ENCODE measurements at regions of chr20 and their contacts with region 1.

Region 1: GRCh38 chr20:1466211-1467081 is at the start of gene NSFL1C:
- DNase-seq: peak; percentile 96
- H3K4me3 Mint-ChIP-seq: peak within 1 kb of the TSS; percentile 81
- H3K27ac Mint-ChIP-seq: peak within 1 kb of the TSS; percentile 80
- H3K4me1 Mint-ChIP-seq: peaks cover 48% of the 10 kb centered on the region
- H3K27me3 Mint-ChIP-seq: peaks cover 16% of the 10 kb centered on the region
- total RNA-seq, gene NSFL1C: 56.5 to 64.8 TPM

Region 2: GRCh38 chr20:1212607-1213396 is 253.6 kb before region 1 on chr20:
- CTCF ChIA-PET with region 1: interaction called, 10 read pairs
- POLR2A ChIA-PET with region 1: no interaction called
- DNase-seq: peak; percentile 82
- H3K4me3 Mint-ChIP-seq: no peak overlapping the region
- H3K27ac Mint-ChIP-seq: no peak overlapping the region
- H3K4me1 Mint-ChIP-seq: peaks cover 34% of the 10 kb centered on the region
- H3K27me3 Mint-ChIP-seq: peaks cover 23% of the 10 kb centered on the region

Measured in activated CD4-positive, alpha-beta T cell treated with anti-CD3 and anti-CD28 coated beads, Interleukin-2, amount 10 ng/mL, durations not matched to agents 7 days and 5 days (primary cell).